ENCODE measurements at regions of chr2 and their contacts with region 1.

Region 1: DNA sequence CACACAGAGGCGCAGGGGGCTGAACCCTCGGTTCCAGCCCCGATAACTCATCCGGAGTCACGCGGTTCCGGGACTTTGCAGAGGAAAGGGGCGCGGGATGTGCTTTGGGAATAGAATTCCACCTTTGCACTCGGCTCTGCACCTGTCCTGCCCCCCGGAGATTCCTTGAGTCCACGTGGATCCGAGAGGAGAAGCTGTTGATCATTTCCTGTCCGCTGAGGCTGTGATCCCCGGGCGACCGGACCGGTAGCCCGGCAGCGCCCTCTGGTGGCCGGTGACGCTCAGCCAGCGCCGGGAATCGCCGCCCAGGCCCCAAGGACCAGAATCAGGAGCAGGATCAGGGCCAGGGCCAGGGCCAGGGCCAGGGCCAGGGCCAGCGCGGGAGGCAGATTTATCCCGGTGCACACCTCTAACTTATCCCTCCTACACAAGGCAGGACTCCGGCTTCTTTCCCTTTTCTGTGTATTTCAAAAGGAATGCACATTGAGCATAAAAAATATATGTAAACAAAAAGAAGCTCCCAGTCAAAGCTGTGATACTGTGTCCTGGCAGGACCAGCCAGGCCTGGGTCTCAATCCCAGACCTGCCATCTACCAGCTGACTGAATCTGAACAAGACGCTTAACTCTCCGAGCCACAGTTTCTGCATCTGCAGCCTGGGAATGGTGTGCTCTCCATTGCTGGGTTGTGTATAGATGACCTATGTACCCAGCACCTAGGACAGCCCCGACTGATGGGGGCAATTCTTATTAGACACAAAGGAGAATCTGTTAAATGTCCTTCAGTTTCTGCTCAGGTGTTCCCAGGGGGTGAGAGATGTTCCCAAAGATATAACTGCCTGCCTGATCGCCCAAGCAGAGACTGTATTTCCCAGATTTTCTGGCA is 8.5 kb upstream of the SPATA3 start:
- DNase-seq: peak; percentile 92
- CTCF ChIP-seq: peak; percentile 96

Region 2: GRCh38 chr2:230864598-230865306 is 122.6 kb before region 1 on chr2 and contains the start of gene ITM2C:
- CTCF ChIA-PET with region 1: interaction called, 11 read pairs
- POLR2A ChIA-PET with region 1: no interaction called
- DNase-seq: peak; percentile 90
- CTCF ChIP-seq: peak; percentile 58

Region 3: DNA sequence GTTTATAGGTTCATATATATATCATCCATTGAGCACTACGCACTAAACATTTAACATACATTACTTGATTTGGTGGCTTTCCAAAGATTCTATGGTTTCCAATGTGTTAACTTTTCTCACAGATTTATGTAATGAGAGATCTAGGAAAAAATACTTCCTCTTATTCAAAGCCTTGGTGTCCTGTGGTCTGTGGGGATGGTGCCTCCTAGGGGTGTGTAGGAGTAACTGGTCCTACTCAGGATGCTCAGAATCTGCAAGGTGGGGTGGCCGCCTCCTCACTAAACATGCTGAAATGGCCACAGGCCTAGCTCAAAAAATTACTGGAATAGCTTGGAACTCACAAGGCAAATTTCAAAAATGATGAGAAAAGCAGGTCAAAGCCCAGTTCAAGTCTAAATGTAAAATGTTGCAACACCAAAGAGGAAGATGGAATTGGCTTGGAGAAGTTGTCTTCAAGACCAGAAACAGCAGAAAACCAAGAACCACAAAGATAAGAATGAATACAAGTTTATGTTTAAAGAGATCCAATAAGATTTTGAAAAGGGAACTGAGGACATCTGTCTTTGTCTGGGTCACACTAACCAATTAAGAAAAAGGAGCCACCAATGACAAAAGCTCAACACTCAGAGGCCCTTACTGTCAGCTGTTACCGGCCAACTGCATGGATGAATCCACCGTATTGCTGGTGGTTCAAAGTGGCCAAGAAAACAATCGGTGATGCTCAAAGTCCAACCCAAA is 73.8 kb before region 1 on chr2:
- CTCF ChIA-PET with region 1: interaction called, 256 read pairs
- POLR2A ChIA-PET with region 1: no interaction called
- DNase-seq: no peak
- CTCF ChIP-seq: peak; percentile 33

Region 4: GRCh38 chr2:230949966-230950873 is 37.2 kb before region 1 on chr2:
- CTCF ChIA-PET with region 1: interaction called, 59 read pairs
- POLR2A ChIA-PET with region 1: interaction called, 27 read pairs
- DNase-seq: peak; percentile 58
- CTCF ChIP-seq: no peak

Region 5: GRCh38 chr2:230974096-230974913 is 13.1 kb before region 1 on chr2:
- CTCF ChIA-PET with region 1: interaction called, 59 read pairs
- POLR2A ChIA-PET with region 1: interaction called, 7 read pairs
- DNase-seq: peak; percentile 84
- CTCF ChIP-seq: no peak

Region 6: DNA sequence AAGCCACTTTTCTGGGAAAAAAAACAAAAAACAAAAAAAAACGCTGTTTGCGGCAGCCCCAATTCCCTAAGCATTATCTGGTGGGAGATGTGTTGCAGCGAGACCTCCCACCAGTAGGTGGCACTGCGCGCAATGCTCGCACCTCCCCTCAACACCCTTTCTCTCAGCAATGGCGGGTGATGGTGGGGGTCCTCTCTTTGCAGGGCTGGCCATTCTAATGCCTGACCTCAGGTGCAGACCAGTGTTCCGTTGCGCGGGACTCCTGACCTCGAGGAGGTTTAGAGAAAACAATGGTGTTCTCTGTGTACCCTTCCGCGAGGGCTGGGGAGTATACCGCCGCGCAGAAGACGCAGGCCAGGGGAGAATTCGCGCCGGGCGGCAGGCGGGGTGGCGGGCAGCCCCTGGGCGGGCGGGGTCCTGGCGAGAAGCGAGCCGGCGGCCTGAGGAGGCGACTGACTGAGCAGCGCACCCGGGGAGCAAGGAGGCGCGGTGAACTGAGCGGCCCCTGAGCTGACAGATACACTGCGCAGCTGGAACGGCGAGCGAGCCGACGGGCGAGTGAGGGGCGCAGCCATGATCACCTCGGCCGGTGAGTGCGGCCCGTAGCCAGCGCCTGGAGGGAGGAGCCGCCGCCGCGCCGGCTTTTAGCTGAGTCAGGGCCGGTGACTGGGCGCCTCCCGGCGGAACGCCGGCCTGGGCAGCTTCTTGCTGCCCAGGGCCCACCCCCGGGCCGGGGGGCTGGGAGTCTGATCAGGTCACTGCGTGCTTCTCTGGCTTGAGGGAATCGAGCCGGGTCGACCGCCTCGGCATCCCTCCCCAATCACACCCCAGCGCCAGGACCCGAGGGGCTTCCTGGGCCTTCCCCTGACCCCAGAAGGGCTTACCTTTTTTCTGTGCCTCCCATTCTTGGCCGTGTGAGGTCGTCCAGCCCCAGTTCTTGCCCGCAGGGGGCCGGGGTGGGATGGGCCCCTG is 69.4 kb after region 1 on chr2 and contains the start of gene PSMD1:
- CTCF ChIA-PET with region 1: interaction called, 18 read pairs
- POLR2A ChIA-PET with region 1: no interaction called
- DNase-seq: peak; percentile 94
- CTCF ChIP-seq: peak; percentile 95